ENCODE measurements at regions of chr4 and their contacts with region 1.

Region 1: DNA sequence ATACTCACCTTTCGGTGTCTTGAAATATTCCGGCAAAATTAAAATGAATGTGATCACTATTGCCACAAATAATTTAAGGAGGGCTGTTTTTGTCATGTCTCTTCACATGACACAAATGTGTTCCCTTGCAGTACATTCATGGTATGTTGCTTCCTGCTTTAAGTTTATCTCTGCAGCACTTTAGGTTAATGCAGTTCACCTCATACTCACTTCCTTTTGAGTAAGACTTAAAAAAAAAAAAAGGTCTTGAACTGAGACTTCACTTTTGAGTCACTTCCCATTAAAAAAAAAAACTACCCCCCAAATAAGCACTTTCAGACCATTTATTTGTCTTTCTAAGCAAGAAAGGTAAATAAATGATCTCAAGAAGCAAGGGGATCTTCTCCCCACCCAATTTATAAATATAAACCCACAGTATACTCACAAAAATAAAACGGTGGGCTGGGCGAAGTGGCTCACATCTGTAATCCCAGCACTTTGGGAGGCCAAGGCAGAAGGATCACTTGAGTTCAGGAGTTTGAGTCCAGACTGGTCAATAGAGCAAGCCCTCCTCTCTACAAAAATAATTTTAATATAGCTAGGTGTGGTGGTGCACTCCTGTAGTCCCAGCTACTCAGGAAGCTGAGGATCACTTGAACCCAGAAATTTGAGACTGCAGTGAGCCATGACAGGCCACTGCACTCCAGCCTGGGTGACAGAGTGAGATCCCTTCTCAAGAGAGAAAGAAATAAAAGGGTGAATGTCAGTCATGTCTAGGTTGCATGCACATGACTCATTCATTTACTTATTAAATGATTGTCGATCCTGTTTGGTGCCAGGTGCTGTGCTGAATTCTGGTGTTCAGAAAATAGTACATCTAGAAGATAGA is at the start of gene TMEM156:
- DNase-seq: peak; percentile 46
- H3K4me3 Mint-ChIP-seq: peak within 1 kb of the TSS; percentile 79
- H3K27ac Mint-ChIP-seq: peak within 1 kb of the TSS; percentile 77
- H3K4me1 Mint-ChIP-seq: peaks cover 34% of the 10 kb centered on the region
- H3K27me3 Mint-ChIP-seq: no peaks in the 10 kb centered on the region
- total RNA-seq, gene TMEM156: 27.6 to 28.2 TPM

Region 2: GRCh38 chr4:38730830-38731646 is 301.4 kb before region 1 on chr4:
- CTCF ChIA-PET with region 1: no interaction called
- POLR2A ChIA-PET with region 1: no interaction called
- DNase-seq: peak; percentile 80
- H3K4me3 Mint-ChIP-seq: no peak overlapping the region
- H3K27ac Mint-ChIP-seq: no peak overlapping the region
- H3K4me1 Mint-ChIP-seq: peaks cover 19% of the 10 kb centered on the region
- H3K27me3 Mint-ChIP-seq: peaks cover 23% of the 10 kb centered on the region

Region 3: DNA sequence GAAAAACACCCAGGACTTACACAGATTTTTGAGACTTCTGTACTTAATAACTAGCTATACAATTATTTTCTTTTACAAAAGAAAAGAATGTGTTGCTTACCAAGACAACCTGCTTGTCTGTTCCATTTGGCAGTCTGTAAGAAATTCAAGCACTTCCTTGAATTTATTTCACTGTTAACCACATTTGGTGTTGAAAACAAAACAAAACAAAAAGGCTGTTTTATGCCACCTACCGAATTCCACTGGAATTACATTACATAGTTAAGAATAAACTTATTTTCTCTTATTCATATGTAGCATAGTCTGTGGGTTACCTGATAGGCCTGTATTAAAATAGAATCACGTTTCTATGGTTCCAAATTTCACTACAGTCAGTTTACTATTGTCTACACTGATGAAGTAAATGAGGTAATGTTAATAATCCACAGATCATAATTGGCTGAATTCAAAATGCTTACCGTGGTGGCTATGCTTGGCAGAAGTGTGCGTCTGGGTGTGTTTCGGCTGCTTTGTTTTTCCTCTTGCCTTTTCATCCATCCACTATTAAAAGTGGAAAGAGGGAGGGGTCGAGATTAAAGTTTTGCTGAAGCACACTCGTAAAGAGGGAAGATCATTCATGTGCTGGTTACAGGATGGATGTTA is 227.7 kb before region 1 on chr4 and contains the start of gene TLR1:
- CTCF ChIA-PET with region 1: no interaction called
- POLR2A ChIA-PET with region 1: no interaction called
- DNase-seq: no peak
- H3K4me3 Mint-ChIP-seq: peak within 1 kb of the TSS; percentile 80
- H3K27ac Mint-ChIP-seq: peak within 1 kb of the TSS; percentile 85
- H3K4me1 Mint-ChIP-seq: peaks cover 37% of the 10 kb centered on the region
- H3K27me3 Mint-ChIP-seq: no peaks in the 10 kb centered on the region
- total RNA-seq, gene TLR1: 11.7 to 12.0 TPM

Region 4: GRCh38 chr4:38983787-38984598 is 48.5 kb before region 1 on chr4:
- CTCF ChIA-PET with region 1: interaction called, 5 read pairs
- POLR2A ChIA-PET with region 1: interaction called, 12 read pairs
- DNase-seq: no peak
- H3K4me3 Mint-ChIP-seq: peak overlapping the region; percentile 31
- H3K27ac Mint-ChIP-seq: peak overlapping the region; percentile 83
- H3K4me1 Mint-ChIP-seq: peaks cover 75% of the 10 kb centered on the region
- H3K27me3 Mint-ChIP-seq: no peaks in the 10 kb centered on the region

Region 5: DNA sequence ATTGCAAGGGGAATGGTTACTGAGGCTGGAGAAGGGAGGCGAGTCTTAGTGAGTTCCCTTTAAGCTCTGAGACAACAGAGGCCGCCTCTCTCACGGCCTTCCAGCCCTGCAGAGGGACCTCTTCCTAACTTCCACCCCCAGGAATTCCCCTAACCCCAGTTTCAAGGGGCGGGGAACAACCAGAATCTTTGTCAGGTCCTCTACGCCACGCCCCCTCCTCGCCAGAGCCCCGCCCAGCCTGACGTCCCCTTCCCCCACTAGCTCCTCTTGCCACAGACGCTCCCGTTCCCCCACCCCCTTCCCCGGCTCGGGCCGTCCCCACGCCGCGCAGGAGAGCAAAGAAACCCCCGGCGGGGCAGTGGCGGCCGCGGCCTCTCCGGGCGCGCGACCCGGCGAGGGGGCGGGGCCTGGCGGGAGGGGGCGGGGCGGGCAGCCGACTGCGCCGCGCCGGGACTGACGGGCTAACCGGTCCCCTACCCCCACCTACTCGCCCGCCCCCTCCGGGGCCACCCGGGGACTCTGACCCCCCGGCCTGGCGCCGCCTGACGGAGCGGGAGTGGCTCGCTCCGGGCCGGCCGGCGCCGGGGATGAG is 12.0 kb after region 1 on chr4:
- CTCF ChIA-PET with region 1: interaction called, 23 read pairs
- POLR2A ChIA-PET with region 1: interaction called, 181 read pairs
- DNase-seq: peak; percentile 94
- H3K4me3 Mint-ChIP-seq: peak overlapping the region; percentile 80
- H3K27ac Mint-ChIP-seq: peak overlapping the region; percentile 82
- H3K4me1 Mint-ChIP-seq: peaks cover 56% of the 10 kb centered on the region
- H3K27me3 Mint-ChIP-seq: no peaks in the 10 kb centered on the region

Region 6: GRCh38 chr4:39051454-39051853 is 19.0 kb after region 1 on chr4:
- CTCF ChIA-PET with region 1: interaction called, 23 read pairs
- POLR2A ChIA-PET with region 1: interaction called, 181 read pairs
- DNase-seq: no peak
- H3K4me3 Mint-ChIP-seq: no peak overlapping the region
- H3K27ac Mint-ChIP-seq: no peak overlapping the region
- H3K4me1 Mint-ChIP-seq: peaks cover 44% of the 10 kb centered on the region
- H3K27me3 Mint-ChIP-seq: no peaks in the 10 kb centered on the region

Region 7: GRCh38 chr4:39154009-39154408 is 121.6 kb after region 1 on chr4:
- CTCF ChIA-PET with region 1: no interaction called
- POLR2A ChIA-PET with region 1: no interaction called
- DNase-seq: no peak
- H3K4me3 Mint-ChIP-seq: no peak overlapping the region
- H3K27ac Mint-ChIP-seq: no peak overlapping the region
- H3K4me1 Mint-ChIP-seq: peaks cover 4% of the 10 kb centered on the region
- H3K27me3 Mint-ChIP-seq: no peaks in the 10 kb centered on the region

Measured in activated CD4-positive, alpha-beta memory T cell treated with anti-CD3 and anti-CD28 coated beads, Interleukin-2, amount 10 ng/mL, durations not matched to agents 7 days and 5 days (primary cell).